ENCODE measurements at regions of chr4 and their contacts with region 1.

Region 1: GRCh38 chr4:118835571-118836300 is at the start of gene SEC24D:
- DNase-seq: peak; percentile 78
- H3K4me3 Mint-ChIP-seq: peak within 1 kb of the TSS; percentile 100
- H3K27ac Mint-ChIP-seq: peak within 1 kb of the TSS; percentile 99
- H3K4me1 Mint-ChIP-seq: peaks cover 15% of the 10 kb centered on the region
- H3K27me3 Mint-ChIP-seq: no peaks in the 10 kb centered on the region
- total RNA-seq, gene SEC24D: 28.4 to 29.7 TPM

Region 2: DNA sequence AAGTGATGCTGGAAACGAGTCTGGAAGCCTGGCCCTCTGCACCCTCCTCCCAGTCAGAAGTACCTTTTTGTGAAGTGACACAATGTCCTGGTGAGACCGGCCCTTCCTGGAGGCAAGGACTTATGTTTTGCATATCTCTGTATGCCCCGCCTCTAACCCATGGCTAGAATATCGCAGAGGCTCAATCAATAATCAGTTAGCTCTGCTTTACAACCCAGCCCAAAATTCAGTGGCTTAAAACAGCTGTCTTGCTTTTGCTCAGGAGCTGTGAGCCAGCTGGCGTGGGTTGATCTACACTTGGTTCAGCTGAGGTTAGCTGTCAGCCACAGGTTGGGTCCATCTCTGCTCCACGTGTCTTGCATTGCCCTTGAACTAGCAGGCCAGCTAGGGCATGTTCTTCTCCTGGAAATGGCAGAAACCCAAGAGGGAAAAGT is 249.4 kb before region 1 on chr4:
- CTCF ChIA-PET with region 1: no interaction called
- intact Hi-C with region 1: loop called (anchors 1 kb)
- DNase-seq: no peak
- H3K4me3 Mint-ChIP-seq: no peak overlapping the region
- H3K27ac Mint-ChIP-seq: no peak overlapping the region
- H3K4me1 Mint-ChIP-seq: peaks cover 16% of the 10 kb centered on the region
- H3K27me3 Mint-ChIP-seq: peaks cover 23% of the 10 kb centered on the region

Region 3: GRCh38 chr4:118684873-118685811 is 150.6 kb before region 1 on chr4 and contains the start of gene METTL14:
- CTCF ChIA-PET with region 1: interaction called, 3 read pairs
- intact Hi-C with region 1: loop called (anchors 1 kb)
- DNase-seq: peak; percentile 93
- H3K4me3 Mint-ChIP-seq: peak within 1 kb of the TSS; percentile 95
- H3K27ac Mint-ChIP-seq: peak within 1 kb of the TSS; percentile 89
- H3K4me1 Mint-ChIP-seq: peaks cover 27% of the 10 kb centered on the region
- H3K27me3 Mint-ChIP-seq: no peaks in the 10 kb centered on the region
- total RNA-seq, gene METTL14: 35.9 to 36.9 TPM

Region 4: DNA sequence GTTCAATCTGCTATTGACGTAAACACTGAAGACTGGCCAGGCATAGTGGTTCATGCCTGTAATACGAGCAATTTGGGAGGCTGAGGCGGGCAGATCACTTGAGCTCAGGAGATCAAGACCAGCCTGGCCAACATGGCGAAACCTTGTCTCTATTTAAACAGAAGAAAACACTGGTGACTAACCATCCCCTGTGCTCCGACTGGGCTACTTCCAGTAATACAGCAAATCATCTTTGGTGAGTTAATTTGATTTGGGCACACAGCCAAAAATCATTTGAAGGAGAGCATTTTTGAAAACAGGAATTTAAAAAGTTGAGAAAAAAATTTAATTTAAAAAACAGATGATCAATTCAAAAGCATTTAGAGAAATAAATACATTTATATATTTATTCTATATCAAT is 51.8 kb before region 1 on chr4:
- CTCF ChIA-PET with region 1: no interaction called
- intact Hi-C with region 1: no loop called
- DNase-seq: no peak
- H3K4me3 Mint-ChIP-seq: no peak overlapping the region
- H3K27ac Mint-ChIP-seq: no peak overlapping the region
- H3K4me1 Mint-ChIP-seq: no peaks in the 10 kb centered on the region
- H3K27me3 Mint-ChIP-seq: no peaks in the 10 kb centered on the region

Region 5: GRCh38 chr4:118850488-118851173 is 14.9 kb after region 1 on chr4:
- CTCF ChIA-PET with region 1: interaction called, 5 read pairs
- intact Hi-C with region 1: loop called (anchors 1 kb)
- DNase-seq: peak; percentile 50
- H3K4me3 Mint-ChIP-seq: peak overlapping the region; percentile 87
- H3K27ac Mint-ChIP-seq: peak overlapping the region; percentile 84
- H3K4me1 Mint-ChIP-seq: peaks cover 18% of the 10 kb centered on the region
- H3K27me3 Mint-ChIP-seq: no peaks in the 10 kb centered on the region

Region 6: DNA sequence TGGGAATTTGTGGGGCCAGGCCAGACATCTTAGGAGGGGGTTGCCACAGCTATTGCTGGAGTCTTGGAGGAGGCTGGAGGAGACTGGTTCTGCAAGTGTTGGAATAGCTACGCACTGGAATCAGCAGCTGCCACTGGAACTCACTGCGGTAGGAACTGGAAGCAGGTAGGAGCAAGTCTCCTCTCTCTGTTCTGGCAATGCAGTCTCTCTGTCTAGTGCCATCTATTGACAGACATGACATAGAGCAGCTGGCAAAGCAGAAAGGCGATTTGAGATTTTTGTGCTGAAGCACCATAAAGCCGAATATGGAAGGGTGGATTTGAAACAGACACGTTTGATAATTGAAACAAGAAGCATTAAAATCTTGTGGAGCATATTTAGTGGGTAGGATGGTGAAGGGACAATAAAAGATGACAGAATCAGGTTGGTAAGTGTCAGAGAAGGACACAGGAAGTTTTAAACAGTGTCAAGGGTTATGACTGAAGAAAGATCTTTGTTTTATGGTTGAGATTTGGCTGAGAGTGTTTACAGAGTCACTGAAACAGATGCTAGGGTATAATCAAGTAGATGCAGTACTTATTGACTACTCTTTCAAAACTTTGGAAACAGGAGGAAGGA is 29.5 kb after region 1 on chr4:
- CTCF ChIA-PET with region 1: interaction called, 5 read pairs
- intact Hi-C with region 1: loop called (anchors 5 kb)
- DNase-seq: peak; percentile 29
- H3K4me3 Mint-ChIP-seq: no peak overlapping the region
- H3K27ac Mint-ChIP-seq: no peak overlapping the region
- H3K4me1 Mint-ChIP-seq: no peaks in the 10 kb centered on the region
- H3K27me3 Mint-ChIP-seq: no peaks in the 10 kb centered on the region

Region 7: GRCh38 chr4:119300101-119300978 is 464.6 kb after region 1 on chr4:
- CTCF ChIA-PET with region 1: no interaction called
- intact Hi-C with region 1: loop called (anchors 1 kb)
- DNase-seq: peak; percentile 92
- H3K4me3 Mint-ChIP-seq: peak overlapping the region; percentile 97
- H3K27ac Mint-ChIP-seq: peak overlapping the region; percentile 95
- H3K4me1 Mint-ChIP-seq: peaks cover 25% of the 10 kb centered on the region
- H3K27me3 Mint-ChIP-seq: no peaks in the 10 kb centered on the region

Measured in activated naive CD4-positive, alpha-beta T cell treated with anti-CD3 and anti-CD28 coated beads for 36 hours (primary cell).